ENCODE measurements at regions of chr5 and their contacts with region 1.

Region 1: GRCh38 chr5:56270568-56271392 is 37.6 kb upstream of the ANKRD55 start:
- DNase-seq: peak; percentile 67 to 84 (median 77)
- ATAC-seq: peak; percentile 98
- H3K4me3 ChIP-seq: no peak overlapping the region
- H3K4me1 ChIP-seq: no peaks in the 10 kb centered on the region
- CTCF ChIP-seq: peak; percentile 91

Region 2: DNA sequence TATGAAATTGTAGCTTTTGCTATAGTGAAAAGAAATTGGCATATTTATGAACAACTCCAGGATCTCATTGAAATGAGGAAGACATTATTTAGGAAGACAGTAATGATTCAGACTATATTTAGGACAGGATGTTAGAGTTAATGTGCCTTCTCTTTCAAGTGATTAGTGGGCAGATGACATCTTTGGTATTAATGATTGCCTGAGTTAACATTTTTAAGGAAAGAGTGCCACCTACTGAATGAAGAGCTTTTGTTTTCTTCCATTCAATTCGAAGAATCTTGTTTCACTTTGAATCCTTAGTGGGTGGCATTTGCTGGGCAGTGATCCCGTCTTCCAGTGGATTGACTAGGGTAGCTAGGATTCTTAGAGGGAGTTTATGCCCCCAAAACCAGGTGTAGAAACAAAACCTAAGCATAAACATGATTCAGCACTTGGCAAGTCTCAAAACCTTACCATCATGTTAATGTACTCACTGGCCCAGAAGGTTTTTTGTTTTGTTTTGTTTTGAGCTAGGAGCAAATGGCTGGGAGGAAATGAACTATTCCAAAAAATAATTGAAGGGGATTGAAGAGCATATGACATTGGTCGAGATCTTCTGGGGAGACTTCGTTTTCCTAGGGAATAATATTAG is 567.7 kb after region 1 on chr5:
- intact Hi-C with region 1: loop called (anchors 5 kb)
- DNase-seq: no peak
- ATAC-seq: peak; percentile 59
- H3K4me3 ChIP-seq: no peak overlapping the region
- H3K4me1 ChIP-seq: peaks cover 8% of the 10 kb centered on the region
- CTCF ChIP-seq: no peak

Measured in mucosa of descending colon (tissue), 3 donors.